ENCODE measurements at regions of chr1 and their contacts with region 1.

Region 1: GRCh38 chr1:23122023-23122748 is 46.5 kb downstream of the LUZP1 start:
- DNase-seq: peak; percentile 60
- H3K4me3 ChIP-seq: no peak overlapping the region
- H3K27ac ChIP-seq: no peak overlapping the region
- H3K4me1 ChIP-seq: peaks cover 43% of the 10 kb centered on the region
- H3K27me3 ChIP-seq: no peaks in the 10 kb centered on the region
- CTCF ChIP-seq: no peak
- POLR2A ChIP-seq: no peak

Region 2: GRCh38 chr1:21397813-21398188 is 1724.4 kb before region 1 on chr1:
- CTCF ChIA-PET with region 1: no interaction called
- POLR2A ChIA-PET with region 1: no interaction called
- dilution Hi-C with region 1: no loop called
- intact Hi-C with region 1: no loop called
- DNase-seq: no peak
- H3K4me3 ChIP-seq: no peak overlapping the region
- H3K27ac ChIP-seq: no peak overlapping the region
- H3K4me1 ChIP-seq: peaks cover 6% of the 10 kb centered on the region
- H3K27me3 ChIP-seq: peaks cover 3 to 15% of the 10 kb centered on the region in 2 experiments
- CTCF ChIP-seq: no peak
- POLR2A ChIP-seq: no peak

Region 3: DNA sequence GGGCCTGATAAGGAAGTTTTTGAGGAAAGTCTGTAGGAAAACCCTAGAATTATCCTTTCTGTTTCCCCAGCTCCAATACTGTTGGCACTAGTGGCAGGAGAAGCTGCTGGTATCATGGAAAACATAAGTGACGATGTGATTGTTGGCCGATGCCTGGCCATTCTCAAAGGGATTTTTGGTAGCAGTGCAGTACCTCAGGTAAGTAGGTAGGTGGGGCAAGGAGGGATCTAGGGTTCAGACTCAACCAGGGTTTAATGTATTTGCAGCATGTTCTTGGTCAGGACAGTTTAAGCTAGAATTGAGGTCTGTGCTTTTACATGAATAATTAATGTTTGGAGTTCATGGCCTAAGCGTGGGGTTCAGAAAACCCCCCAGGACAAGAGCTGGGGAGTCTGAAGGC is 40.8 kb before region 1 on chr1:
- CTCF ChIA-PET with region 1: no interaction called
- POLR2A ChIA-PET with region 1: no interaction called
- dilution Hi-C with region 1: no loop called
- intact Hi-C with region 1: no loop called
- DNase-seq: no peak
- H3K4me3 ChIP-seq: no peak overlapping the region
- H3K27ac ChIP-seq: no peak overlapping the region
- H3K4me1 ChIP-seq: peaks cover 11% of the 10 kb centered on the region
- H3K27me3 ChIP-seq: no peaks in the 10 kb centered on the region
- CTCF ChIP-seq: peak in 1 of 2 donors; percentile 6
- POLR2A ChIP-seq: no peak

Region 4: DNA sequence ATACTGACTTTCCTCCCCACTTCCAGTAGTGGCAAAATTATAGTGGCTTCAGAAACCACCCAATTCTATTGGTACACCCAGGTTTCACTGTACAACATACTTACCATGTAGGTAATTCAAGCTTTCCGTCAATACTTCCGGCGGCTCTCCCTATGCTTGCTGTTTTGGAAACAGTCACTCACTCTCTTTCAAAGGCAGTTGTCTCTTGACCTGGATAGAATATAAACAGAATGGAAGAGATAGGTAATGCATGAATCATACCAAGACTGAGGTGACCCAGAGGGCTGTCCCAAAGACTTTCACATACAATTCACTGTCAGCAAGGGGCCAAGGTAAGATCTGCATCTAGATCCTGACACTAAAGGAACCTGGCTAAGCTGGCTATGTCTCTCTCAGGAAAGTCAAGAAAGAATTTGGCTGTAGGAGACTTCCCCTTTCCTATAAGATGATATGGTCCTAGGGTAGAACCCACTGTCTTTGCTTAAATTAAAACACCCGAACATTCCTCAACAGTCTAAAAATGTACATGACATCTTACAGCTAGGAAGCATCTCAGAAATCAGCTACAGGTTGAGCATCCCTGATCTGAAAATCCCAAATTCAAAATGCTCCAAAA is 13.2 kb before region 1 on chr1:
- CTCF ChIA-PET with region 1: interaction called, 16 read pairs
- POLR2A ChIA-PET with region 1: interaction called, 3 read pairs
- dilution Hi-C with region 1: no loop called
- intact Hi-C with region 1: no loop called
- DNase-seq: no peak
- H3K4me3 ChIP-seq: no peak overlapping the region
- H3K27ac ChIP-seq: no peak overlapping the region
- H3K4me1 ChIP-seq: peaks cover 27% of the 10 kb centered on the region
- H3K27me3 ChIP-seq: no peaks in the 10 kb centered on the region
- CTCF ChIP-seq: no peak
- POLR2A ChIP-seq: no peak

Region 5: GRCh38 chr1:23224714-23225648 is 102.8 kb after region 1 on chr1:
- CTCF ChIA-PET with region 1: no interaction called
- POLR2A ChIA-PET with region 1: no interaction called
- dilution Hi-C with region 1: no loop called
- intact Hi-C with region 1: no loop called
- DNase-seq: peak; percentile 78
- H3K4me3 ChIP-seq: no peak overlapping the region
- H3K27ac ChIP-seq: peak overlapping the region; percentile 46
- H3K4me1 ChIP-seq: peaks cover 17% of the 10 kb centered on the region
- H3K27me3 ChIP-seq: no peaks in the 10 kb centered on the region
- CTCF ChIP-seq: no peak
- POLR2A ChIP-seq: no peak